MCF 10A (cell line): ENCODE measurements at regions of chr5 and their contacts with region 1.

Region 1: DNA sequence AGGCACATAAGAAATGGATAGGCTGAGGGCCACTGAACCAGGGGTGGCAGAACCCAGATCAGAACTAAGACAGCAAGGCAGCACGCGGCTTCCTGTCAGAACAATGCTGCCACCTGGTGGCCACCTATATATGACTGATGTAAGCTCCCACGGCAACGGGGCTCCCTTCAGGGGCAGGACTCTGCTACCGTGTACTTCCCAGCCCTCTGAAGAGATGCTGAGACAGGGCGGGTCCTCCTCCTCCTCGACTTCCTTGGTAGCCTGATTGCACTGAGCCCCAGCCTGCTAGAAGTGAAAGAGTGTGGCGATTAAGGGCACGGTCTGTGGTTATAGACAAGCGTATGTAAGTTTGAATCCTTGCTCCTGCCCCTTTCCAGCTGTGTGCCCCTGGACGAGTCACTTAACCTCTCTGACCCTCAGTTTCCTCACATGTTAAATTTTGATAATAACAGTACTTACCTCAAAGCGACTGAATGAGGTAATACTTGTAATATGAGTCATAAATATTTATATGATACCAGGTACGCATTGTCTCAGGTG is 13.3 kb downstream of the RPS14 start:
- DNase-seq: peak; percentile 89
- H3K4me3 Mint-ChIP-seq: no peak overlapping the region
- H3K27ac Mint-ChIP-seq: no peak overlapping the region
- H3K4me1 Mint-ChIP-seq: peaks cover 14% of the 10 kb centered on the region
- H3K27me3 Mint-ChIP-seq: no peaks in the 10 kb centered on the region
- CTCF ChIP-seq: peak; percentile 94

Region 2: DNA sequence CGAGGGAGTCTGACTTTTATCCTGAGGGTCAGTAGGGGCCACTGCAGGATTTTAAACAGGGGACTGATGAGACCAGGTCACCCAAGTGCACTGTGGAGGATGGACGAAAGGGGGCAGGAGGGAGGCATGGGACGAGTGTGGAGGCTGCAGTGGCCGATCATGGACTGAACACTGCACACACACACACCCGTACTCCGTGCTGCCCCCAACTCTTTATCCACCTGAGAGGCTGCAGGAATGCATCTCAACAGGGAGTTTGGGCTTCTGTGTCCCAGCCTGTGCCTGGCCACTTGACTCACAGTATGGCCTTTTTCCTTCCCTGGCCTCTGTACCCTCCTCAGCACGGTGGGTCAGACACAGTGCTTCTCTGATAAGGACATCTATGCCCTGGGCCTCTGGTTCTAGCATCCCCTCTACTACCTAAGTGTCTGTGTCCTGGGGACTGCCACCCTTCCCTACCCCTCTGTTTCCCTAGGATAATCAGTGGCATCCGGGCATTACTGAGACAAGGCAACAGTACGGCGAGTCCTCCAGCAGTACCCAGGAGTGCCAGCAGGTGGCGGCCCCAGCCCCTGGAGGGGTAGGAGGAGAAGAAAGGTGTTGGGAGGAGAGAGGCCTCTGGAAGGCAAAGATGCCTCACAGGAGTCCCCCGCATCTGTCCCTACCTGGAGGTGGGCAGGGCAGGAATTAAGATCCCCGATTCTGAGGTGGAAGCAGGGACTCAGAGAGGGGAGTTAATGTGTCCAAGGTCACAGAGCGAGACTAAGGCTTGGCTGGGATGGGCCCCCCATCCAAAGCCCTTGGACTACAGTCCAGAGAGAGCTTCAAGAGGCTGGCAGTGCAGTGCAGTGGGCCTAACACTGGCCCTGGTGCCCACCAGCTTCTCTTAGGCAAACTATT is 274.7 kb before region 1 on chr5:
- CTCF ChIA-PET with region 1: interaction called, 5 read pairs
- POLR2A ChIA-PET with region 1: interaction called, 3 read pairs
- intact Hi-C with region 1: loop called (anchors 1 kb)
- DNase-seq: peak; percentile 88
- H3K4me3 Mint-ChIP-seq: no peak overlapping the region
- H3K27ac Mint-ChIP-seq: no peak overlapping the region
- H3K4me1 Mint-ChIP-seq: peaks cover 12% of the 10 kb centered on the region
- H3K27me3 Mint-ChIP-seq: no peaks in the 10 kb centered on the region
- CTCF ChIP-seq: peak; percentile 98

Region 3: DNA sequence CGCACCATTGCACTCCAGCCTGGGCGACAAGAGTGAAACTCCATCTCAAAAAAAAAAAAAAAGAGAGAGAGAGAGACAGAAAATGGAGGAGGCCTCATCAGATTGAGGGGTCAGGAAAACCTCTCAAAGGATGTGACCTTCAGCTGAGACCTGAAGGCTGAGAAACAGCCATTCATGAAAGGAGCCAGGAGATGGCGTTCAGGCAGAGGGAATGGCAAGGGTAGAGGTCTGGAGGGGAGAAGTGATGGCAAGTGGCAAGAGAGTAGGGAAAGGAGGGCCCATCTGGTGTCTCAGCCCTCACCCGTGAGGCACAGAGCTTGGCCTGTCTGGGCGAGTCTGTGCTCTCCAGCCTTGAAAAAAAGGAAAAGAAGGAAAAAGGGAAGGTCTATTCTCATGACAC is 163.7 kb before region 1 on chr5:
- CTCF ChIA-PET with region 1: interaction called, 4 read pairs
- POLR2A ChIA-PET with region 1: no interaction called
- intact Hi-C with region 1: loop called (anchors 1 kb)
- DNase-seq: peak; percentile 81
- H3K4me3 Mint-ChIP-seq: no peak overlapping the region
- H3K27ac Mint-ChIP-seq: no peak overlapping the region
- H3K4me1 Mint-ChIP-seq: peaks cover 10% of the 10 kb centered on the region
- H3K27me3 Mint-ChIP-seq: no peaks in the 10 kb centered on the region
- CTCF ChIP-seq: peak; percentile 84

Region 4: DNA sequence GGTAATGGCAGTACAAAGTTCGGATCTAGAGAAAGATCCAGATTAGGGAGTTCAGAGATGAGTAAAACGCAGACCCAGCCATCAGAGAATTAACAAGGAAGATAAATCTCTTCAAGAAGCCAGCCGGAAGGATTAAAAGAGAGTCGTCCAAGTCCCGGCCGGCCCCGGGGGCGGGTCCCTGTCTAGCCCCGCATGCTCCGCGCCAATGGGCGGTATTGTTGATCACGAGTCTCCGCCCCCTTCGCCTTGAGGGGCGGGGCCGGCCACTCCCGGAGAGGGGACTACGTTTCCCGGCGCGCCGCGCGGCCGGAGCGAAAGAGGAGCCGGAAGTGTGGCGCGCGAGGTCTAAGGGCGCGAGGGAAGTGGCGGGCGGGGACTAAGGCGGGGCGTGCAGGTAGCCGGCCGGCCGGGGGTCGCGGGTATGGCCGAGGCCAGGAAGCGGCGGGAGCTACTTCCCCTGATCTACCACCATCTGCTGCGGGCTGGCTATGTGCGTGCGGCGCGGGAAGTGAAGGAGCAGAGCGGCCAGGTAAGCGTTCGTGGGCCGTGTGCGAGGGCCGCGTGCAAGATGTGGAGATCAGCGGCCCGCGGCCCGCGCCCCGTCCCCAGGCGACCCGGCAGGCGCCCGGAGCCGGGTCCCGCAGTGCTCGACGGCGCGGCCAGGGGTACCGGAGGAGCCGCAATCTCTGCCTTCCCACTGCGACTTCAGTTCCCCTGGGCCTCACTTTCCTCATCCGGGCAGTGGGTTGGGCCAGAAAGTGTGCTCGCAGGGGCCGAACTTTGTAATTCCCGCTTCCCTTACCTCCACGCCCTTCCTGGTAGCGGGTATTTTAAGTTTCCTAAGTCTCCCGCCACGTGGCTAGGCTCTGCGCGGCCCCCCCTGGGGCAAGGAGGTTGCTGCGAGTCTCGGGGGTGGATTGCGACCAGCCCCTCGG is 78.6 kb before region 1 on chr5 and contains the start of gene TCOF1:
- CTCF ChIA-PET with region 1: interaction called, 8 read pairs
- POLR2A ChIA-PET with region 1: interaction called, 3 read pairs
- intact Hi-C with region 1: loop called (anchors 1 kb)
- DNase-seq: peak; percentile 99
- H3K4me3 Mint-ChIP-seq: peak within 1 kb of the TSS; percentile 81
- H3K27ac Mint-ChIP-seq: peak within 1 kb of the TSS; percentile 72
- H3K4me1 Mint-ChIP-seq: peaks cover 16% of the 10 kb centered on the region
- H3K27me3 Mint-ChIP-seq: no peaks in the 10 kb centered on the region
- CTCF ChIP-seq: no peak
- total RNA-seq, gene TCOF1: 68.4 and 83.5 TPM in 2 replicates

Region 5: GRCh38 chr5:150398722-150399523 is 37.3 kb before region 1 on chr5:
- CTCF ChIA-PET with region 1: interaction called, 11 read pairs
- POLR2A ChIA-PET with region 1: interaction called, 4 read pairs
- intact Hi-C with region 1: no loop called
- DNase-seq: no peak
- H3K4me3 Mint-ChIP-seq: no peak overlapping the region
- H3K27ac Mint-ChIP-seq: no peak overlapping the region
- H3K4me1 Mint-ChIP-seq: no peaks in the 10 kb centered on the region
- H3K27me3 Mint-ChIP-seq: no peaks in the 10 kb centered on the region
- CTCF ChIP-seq: peak; percentile 30

Region 6: GRCh38 chr5:150449517-150450339 is 13.5 kb after region 1 on chr5 and contains the start of gene RPS14:
- CTCF ChIA-PET with region 1: interaction called, 7 read pairs
- POLR2A ChIA-PET with region 1: interaction called, 13 read pairs
- intact Hi-C with region 1: no loop called
- DNase-seq: peak; percentile 98
- H3K4me3 Mint-ChIP-seq: peak within 1 kb of the TSS; percentile 85
- H3K27ac Mint-ChIP-seq: peak within 1 kb of the TSS; percentile 100
- H3K4me1 Mint-ChIP-seq: peaks cover 22% of the 10 kb centered on the region
- H3K27me3 Mint-ChIP-seq: no peaks in the 10 kb centered on the region
- CTCF ChIP-seq: peak; percentile 92
- total RNA-seq, gene RPS14: 5,481 and 5,921 TPM in 2 replicates